H1 (cell line): ENCODE measurements at regions of chr10 and their contacts with region 1.

Region 1: GRCh38 chr10:101291331-101292193 is 62.3 kb upstream of the LBX1 start:
- DNase-seq: peak in 1 of 2 experiments; percentile 86
- H3K4me3 ChIP-seq: peak overlapping the region; percentile 40 to 68 (median 48)
- H3K27ac ChIP-seq: no peak overlapping the region
- H3K4me1 ChIP-seq: peaks cover 15 to 24% (median 17%) of the 10 kb centered on the region in 4 experiments; a peak in 6 of 7 replicates
- H3K27me3 ChIP-seq: peaks cover 47 to 92% (median 82%) of the 10 kb centered on the region in 4 experiments
- CTCF ChIP-seq: peak; percentile 68 to 90 (median 74)
- EP300 ChIP-seq: no peak
- POLR2A ChIP-seq: no peak
- RAD21 ChIP-seq: peak; percentile 67 to 75

Region 2: GRCh38 chr10:101238732-101239105 is 52.8 kb before region 1 on chr10:
- CTCF ChIA-PET with region 1: interaction called, 32 read pairs
- POLR2A ChIA-PET with region 1: interaction called, 3 read pairs
- DNase-seq: no peak
- H3K4me3 ChIP-seq: no peak overlapping the region
- H3K27ac ChIP-seq: no peak overlapping the region
- H3K4me1 ChIP-seq: peaks cover 0 to 14% (median 6%) of the 10 kb centered on the region in 4 experiments; a peak in 6 of 7 replicates
- H3K27me3 ChIP-seq: peaks cover 69 to 84% (median 77%) of the 10 kb centered on the region in 4 experiments
- CTCF ChIP-seq: peak; percentile 80 to 94 (median 88)
- EP300 ChIP-seq: no peak
- POLR2A ChIP-seq: no peak
- RAD21 ChIP-seq: peak; percentile 25 to 57; a peak in 3 of 4 replicates

Region 3: DNA sequence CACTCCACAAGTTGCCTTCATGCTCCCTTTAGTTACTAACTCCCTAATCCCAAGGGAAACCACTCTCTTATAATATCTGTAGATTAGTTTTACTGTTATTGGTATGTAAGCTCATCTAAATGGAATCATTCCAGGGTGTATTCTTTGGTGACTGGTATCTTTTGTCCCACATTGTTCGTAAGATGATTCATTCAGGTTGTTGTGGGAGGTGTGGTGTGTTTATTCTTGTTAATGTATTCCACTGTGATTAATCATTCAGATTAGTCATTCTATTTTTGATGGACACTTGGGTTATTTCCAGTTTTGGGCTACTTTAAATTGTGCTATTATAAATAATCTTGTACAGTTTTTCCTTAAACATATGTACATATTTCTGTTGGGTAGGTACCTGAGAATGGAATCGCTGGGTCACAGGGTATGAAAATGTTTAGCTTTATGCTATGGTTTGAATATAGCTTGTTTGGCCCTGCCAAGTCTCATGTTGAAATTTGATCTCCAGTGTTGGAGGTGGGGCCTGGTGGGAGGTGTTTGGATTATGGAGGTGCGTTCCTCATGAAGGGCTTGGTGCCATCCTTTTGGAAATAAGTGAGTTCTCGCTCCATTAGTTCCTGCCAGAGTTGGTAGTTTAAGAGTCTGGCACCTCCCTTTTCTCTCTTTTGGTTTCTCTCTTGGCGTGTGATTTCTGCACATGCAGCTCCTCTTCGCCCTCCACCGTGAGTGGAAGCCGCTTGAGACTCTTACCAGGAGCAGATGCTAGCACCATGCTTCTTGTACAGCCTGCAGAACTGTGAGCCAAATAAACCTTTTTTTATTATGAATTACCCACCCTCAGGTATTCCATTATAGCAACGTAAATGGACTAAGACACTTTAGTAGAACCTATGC is 76.2 kb after region 1 on chr10:
- CTCF ChIA-PET with region 1: interaction called, 19 read pairs
- POLR2A ChIA-PET with region 1: no interaction called
- DNase-seq: no peak
- H3K4me3 ChIP-seq: no peak overlapping the region
- H3K27ac ChIP-seq: no peak overlapping the region
- H3K4me1 ChIP-seq: peaks cover 0 to 2% (median 0%) of the 10 kb centered on the region in 4 experiments; a peak in 1 of 7 replicates
- H3K27me3 ChIP-seq: no peaks in the 10 kb centered on the region
- CTCF ChIP-seq: no peak
- EP300 ChIP-seq: no peak
- POLR2A ChIP-seq: no peak
- RAD21 ChIP-seq: no peak

Region 4: DNA sequence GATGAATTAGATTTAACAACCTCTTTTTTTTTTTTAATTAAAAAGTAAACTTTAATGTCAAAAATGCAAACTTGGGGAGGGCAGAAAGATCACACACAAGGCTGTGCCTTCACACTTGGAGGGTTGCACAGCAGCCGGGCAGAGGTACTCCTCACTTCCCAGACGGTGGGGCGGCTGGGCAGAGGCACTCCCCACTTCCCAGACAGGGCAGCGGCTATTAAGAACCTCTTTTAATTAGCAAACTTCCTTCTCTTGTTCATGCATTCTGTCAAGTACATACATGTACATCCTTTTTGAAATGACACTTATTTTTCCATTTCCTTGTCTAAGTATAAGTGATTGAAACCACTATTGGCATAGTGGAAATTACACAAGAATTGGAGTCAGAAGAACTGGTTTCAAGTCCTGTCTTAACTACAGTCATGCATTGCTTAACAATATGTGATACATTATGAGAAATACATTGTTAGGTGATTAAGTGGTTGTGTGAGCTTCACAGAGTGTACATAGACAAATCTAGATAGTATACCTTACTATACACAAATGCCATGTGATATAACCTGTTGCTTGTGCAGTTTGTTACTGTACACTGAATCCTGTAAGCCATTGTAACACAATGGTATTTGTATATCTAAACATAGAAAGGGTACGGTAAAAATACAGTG is 88.9 kb after region 1 on chr10:
- CTCF ChIA-PET with region 1: no interaction called
- POLR2A ChIA-PET with region 1: no interaction called
- DNase-seq: no peak
- H3K4me3 ChIP-seq: no peak overlapping the region
- H3K27ac ChIP-seq: no peak overlapping the region
- H3K4me1 ChIP-seq: no peaks in the 10 kb centered on the region
- H3K27me3 ChIP-seq: no peaks in the 10 kb centered on the region
- CTCF ChIP-seq: no peak
- EP300 ChIP-seq: no peak
- POLR2A ChIP-seq: no peak
- RAD21 ChIP-seq: no peak

Region 5: DNA sequence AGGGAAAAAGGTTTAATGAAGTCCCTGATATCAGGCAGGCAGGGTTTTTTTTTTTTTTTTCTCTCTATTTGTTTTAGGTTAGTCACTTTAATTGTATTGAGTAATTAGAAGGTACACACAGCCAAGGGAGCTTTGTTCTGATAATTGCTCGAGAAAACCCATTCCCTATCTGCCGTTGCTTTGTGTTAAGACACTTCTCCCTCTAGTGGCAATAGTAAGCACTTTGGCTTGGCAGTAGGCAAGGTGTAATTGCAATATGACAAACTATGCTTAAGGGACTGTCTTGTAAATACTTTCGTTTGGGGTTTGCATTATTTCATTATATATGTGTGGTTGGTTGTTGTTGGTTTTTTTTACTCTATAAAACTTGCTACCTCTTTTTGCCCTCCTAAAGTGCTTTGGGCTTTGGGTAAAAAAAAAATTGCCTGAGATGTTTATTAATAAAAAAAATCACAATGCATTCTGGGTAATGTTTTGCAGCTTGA is 175.8 kb after region 1 on chr10:
- CTCF ChIA-PET with region 1: interaction called, 63 read pairs
- POLR2A ChIA-PET with region 1: no interaction called
- DNase-seq: no peak
- H3K4me3 ChIP-seq: no peak overlapping the region
- H3K27ac ChIP-seq: no peak overlapping the region
- H3K4me1 ChIP-seq: peaks cover 1 to 6% (median 4%) of the 10 kb centered on the region in 4 experiments; a peak in 5 of 7 replicates
- H3K27me3 ChIP-seq: no peaks in the 10 kb centered on the region
- CTCF ChIP-seq: peak in 2 of 3 experiments; percentile 75 to 85; a peak in 3 of 4 replicates
- EP300 ChIP-seq: no peak
- POLR2A ChIP-seq: no peak
- RAD21 ChIP-seq: peak; percentile 56 to 69